ENCODE measurements at regions of chr6 and their contacts with region 1.

Region 1: DNA sequence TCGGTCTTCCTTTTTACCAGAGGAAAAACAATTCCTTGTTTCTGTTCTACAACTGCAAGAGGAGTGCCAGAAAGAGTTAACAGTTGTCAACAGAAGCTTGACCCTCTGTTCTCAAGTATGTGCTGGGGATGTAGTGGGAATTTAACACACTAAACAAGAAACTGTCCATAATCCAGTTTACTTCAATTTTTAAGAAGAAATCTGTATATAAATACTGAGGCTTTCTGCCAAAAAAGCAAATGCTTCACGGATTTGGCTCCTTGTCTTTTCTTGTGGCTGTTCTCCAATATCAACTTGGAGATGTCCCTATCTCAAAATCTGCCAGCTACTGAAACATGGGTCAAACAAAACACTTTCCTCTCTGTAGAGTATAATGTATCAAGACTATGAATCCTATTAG is 26.8 kb downstream of the REV3L start:
- DNase-seq: no peak
- ATAC-seq: no peak
- H3K4me3 ChIP-seq: no peak overlapping the region
- H3K27ac ChIP-seq: no peak overlapping the region
- H3K4me1 ChIP-seq: no peaks in the 10 kb centered on the region; a peak in 1 of 5 replicates
- H3K27me3 ChIP-seq: no peaks in the 10 kb centered on the region
- CTCF ChIP-seq: no peak
- EP300 ChIP-seq: no peak
- POLR2A ChIP-seq: no peak
- RAD21 ChIP-seq: no peak

Region 2: DNA sequence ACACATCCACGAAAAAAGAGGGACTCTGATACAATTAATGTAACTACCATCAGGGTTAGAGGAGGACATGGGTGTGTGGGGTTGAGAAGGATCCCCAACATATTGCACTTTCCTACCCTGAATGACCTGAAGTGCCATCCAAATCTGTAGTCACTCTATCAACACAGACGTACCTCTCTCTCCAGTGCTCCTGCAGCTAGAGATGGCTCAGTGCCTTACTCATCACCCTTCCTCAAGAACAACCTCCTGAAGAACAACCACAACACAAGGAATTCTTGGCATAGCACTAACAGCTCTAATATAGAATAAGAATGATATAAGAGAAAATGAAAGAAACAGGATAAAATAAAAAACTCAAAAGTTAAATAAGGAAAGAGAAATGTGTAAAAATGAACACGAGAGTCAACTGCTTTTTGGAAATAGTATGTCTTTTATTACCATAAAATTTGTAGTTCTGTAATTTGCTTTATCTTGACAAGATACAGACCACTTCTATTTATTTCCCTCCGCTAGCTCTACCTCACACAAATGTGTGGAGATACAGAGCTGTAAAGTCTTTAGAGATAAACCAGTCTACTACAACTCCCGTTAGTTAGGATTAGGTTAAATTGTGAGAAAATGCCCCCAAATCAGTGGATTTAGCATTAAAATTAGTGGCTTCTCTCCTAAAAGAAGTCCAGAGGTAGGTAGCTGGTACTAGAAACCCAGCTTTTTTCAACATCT is 37.1 kb before region 1 on chr6:
- CTCF ChIA-PET with region 1: no interaction called
- POLR2A ChIA-PET with region 1: interaction called, 3 read pairs
- in situ Hi-C with region 1: no loop called
- intact Hi-C with region 1: loop called (anchors 2 kb)
- DNase-seq: no peak
- ATAC-seq: no peak
- H3K4me3 ChIP-seq: no peak overlapping the region
- H3K27ac ChIP-seq: no peak overlapping the region
- H3K4me1 ChIP-seq: peaks cover 14% of the 10 kb centered on the region in 2 experiments; a peak in 4 of 5 replicates
- H3K27me3 ChIP-seq: no peaks in the 10 kb centered on the region
- CTCF ChIP-seq: no peak
- EP300 ChIP-seq: no peak
- POLR2A ChIP-seq: no peak
- RAD21 ChIP-seq: no peak